Ovary (tissue), 10 donors: ENCODE measurements at regions of chr16 and their contacts with region 1.

Region 1: DNA sequence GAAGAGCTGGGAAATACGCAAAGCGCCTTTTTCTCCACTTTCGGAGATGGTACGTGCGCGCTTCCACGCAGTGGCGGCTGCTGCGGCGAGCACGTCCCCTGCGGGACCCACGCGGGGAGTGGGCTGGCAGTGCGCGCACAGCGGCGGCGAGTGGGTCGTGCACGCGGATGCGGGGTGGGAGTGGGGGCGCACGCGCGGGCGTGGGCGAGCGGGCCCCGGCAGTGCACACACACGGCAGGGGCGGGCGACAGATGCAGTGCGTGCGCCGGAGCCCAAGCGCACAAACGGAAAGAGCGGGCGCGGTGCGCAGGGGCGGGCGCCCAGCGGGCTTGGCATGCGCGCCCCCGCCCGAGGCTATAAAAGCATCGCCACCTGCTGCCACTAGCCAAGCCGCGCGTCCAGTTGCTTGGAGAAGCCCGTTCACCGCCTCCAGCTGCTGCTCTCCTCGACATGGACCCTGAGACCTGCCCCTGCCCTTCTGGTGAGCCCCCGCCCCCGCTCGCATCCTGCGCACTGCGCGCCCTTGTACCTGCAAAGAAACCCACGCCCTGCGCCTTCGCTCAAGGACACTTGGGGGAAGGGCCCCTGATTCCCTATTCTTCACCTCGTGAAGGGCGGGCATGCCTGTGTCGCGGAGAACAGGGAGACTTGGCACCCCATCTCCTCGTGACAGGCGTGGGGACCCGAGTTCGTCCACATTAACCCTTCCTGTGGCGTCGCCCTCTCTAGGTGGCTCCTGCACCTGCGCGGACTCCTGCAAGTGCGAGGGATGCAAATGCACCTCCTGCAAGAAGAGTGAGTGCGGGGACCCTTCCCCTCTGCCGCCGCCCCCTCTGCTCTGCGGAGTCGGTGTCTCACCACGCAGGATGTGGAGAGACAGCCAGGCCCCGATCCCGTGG is at the start of gene MT3:
- DNase-seq: peak in 1 of 5 donors; percentile 15
- H3K4me3 ChIP-seq: no peak within 1 kb of the TSS
- H3K27ac ChIP-seq: no peak within 1 kb of the TSS
- H3K4me1 ChIP-seq: peaks cover 3% of the 10 kb centered on the region
- H3K27me3 ChIP-seq: no peaks in the 10 kb centered on the region
- CTCF ChIP-seq: no peak
- EP300 ChIP-seq: no peak
- POLR2A ChIP-seq: no peak
- total RNA-seq, gene MT3: 0.53 to 4.8 (median 1.5) TPM in 4 of 7 donors, not detected in the others

Region 2: DNA sequence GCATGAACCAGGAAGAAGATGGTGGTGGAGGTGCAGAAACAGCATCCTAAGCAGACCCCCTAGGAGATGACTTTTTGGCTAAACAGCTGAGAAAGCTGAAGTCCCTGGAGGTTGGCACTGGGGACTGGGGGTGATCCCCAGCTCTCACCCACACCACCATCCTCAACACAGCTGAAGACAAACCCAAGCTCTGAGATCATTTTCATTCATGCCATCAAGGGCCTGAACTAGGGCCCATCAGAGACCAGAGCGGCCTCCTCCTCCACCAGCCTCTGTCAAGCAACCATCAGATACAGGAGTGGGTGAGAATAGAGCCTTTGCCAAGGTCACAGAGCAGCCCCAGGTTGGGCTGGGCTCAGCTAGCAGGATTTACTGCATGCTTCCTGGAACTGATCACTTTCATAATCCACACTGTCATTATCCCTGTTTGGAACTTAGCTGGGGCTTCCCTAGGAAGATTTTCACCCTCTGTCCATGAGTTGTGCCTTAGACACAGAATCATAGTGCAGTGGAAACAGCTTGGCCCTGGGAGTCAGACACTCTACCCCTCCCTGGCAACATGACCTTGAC is 19.5 kb before region 1 on chr16:
- intact Hi-C with region 1: loop called in 1 of 4 experiments (anchors 2 kb)
- DNase-seq: no peak
- H3K4me3 ChIP-seq: no peak overlapping the region
- H3K27ac ChIP-seq: no peak overlapping the region
- H3K4me1 ChIP-seq: no peaks in the 10 kb centered on the region
- H3K27me3 ChIP-seq: no peaks in the 10 kb centered on the region
- CTCF ChIP-seq: no peak
- EP300 ChIP-seq: no peak
- POLR2A ChIP-seq: no peak

Region 3: GRCh38 chr16:56681939-56682702 is 92.7 kb after region 1 on chr16 and contains the start of gene MT1X:
- intact Hi-C with region 1: loop called in 1 of 4 experiments (anchors 10 kb)
- DNase-seq: peak; percentile 89 to 99 (median 91)
- H3K4me3 ChIP-seq: peak within 1 kb of the TSS; percentile 35
- H3K27ac ChIP-seq: peak within 1 kb of the TSS in 1 of 2 donors; percentile 37
- H3K4me1 ChIP-seq: peaks cover 14% of the 10 kb centered on the region
- H3K27me3 ChIP-seq: no peaks in the 10 kb centered on the region
- CTCF ChIP-seq: no peak
- EP300 ChIP-seq: peak; percentile 97
- POLR2A ChIP-seq: peak; percentile 90
- total RNA-seq, gene MT1X: 30.0 to 1,106 (median 141) TPM